RWPE1 (cell line): ENCODE measurements at regions of chr6 and their contacts with region 1.

Region 1: DNA sequence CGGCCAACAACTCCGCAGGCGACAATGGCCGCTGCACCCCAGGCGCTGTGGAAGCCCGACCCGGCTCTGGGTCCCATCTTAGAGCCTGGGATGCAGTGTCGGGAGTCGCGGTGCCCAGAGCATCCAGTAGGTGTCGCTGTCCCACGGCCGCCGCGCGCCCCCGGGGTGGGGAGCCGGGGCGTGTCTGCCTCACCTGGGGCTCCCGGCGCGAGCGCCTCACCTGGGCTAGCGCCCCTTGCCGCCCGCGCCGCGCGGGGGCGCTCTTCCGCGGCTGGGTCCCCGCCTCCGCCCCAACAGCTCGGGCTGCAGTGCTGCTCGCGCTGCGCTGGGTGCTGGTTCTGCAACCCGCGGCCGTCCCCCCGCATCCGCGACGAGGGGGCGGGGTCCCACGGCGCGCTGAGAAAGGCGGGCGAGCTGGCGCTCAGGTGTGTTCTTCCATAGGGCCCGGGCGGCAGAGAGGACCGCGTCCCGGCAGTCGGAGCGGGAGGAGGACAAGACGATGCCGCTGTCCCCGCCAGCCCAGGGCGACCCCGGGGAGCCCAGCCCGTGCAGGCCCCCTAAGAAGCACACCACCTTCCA is at the start of gene CRYBG1:
- DNase-seq: peak; percentile 91
- H3K27ac ChIP-seq: no peak within 1 kb of the TSS
- CTCF ChIP-seq: peak; percentile 97

Region 2: DNA sequence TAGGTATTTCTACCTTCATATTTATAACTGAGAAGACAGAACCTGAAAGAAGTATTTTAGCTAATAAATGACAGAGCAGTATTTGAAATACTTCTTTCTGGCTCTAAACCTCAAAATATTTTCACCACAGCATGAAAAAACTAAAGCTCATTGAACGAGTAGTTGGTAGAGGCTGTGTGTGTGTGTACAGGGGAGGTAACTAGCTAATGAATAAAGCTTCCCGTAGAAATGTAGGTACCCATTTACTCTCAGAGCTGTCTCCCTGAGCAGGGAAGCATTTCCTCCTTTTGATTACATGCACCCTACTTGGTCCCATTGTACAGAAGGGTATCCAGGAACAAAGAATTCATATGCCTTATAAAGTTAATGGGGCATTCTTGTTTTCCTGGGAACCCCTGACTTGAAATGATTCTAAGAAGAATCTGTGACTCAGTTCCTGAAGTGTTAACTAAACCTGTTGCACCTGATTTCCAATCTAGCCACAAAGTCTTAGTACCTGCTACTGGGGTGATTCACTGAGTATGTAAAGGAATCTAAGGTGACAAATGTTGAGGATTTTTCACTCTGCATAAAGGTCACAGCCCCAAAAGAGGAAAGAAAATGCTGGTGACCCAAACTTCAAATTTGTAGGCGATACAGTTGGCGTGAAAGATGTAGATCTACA is 12.5 kb after region 1 on chr6:
- CTCF ChIA-PET with region 1: interaction called, 22 read pairs
- POLR2A ChIA-PET with region 1: no interaction called
- DNase-seq: peak; percentile 49
- H3K27ac ChIP-seq: no peak overlapping the region
- CTCF ChIP-seq: no peak